ENCODE measurements at regions of chr11 and their contacts with region 1.

Region 1: GRCh38 chr11:64659417-64660144 is 63.4 kb downstream of the NRXN2 start:
- DNase-seq: peak in 1 of 2 donors; percentile 45
- ATAC-seq: no peak
- H3K4me3 ChIP-seq: no peak overlapping the region
- H3K27ac ChIP-seq: no peak overlapping the region
- H3K4me1 ChIP-seq: no peaks in the 10 kb centered on the region
- H3K27me3 ChIP-seq: no peaks in the 10 kb centered on the region

Region 2: GRCh38 chr11:64688534-64688982 is 29.0 kb after region 1 on chr11:
- intact Hi-C with region 1: loop called in 1 of 2 experiments (anchors 1 kb)
- DNase-seq: peak; percentile 95 to 97
- ATAC-seq: peak; percentile 93
- H3K4me3 ChIP-seq: no peak overlapping the region
- H3K27ac ChIP-seq: peak overlapping the region in 1 of 2 donors; percentile 11
- H3K4me1 ChIP-seq: no peaks in the 10 kb centered on the region
- H3K27me3 ChIP-seq: no peaks in the 10 kb centered on the region

Region 3: DNA sequence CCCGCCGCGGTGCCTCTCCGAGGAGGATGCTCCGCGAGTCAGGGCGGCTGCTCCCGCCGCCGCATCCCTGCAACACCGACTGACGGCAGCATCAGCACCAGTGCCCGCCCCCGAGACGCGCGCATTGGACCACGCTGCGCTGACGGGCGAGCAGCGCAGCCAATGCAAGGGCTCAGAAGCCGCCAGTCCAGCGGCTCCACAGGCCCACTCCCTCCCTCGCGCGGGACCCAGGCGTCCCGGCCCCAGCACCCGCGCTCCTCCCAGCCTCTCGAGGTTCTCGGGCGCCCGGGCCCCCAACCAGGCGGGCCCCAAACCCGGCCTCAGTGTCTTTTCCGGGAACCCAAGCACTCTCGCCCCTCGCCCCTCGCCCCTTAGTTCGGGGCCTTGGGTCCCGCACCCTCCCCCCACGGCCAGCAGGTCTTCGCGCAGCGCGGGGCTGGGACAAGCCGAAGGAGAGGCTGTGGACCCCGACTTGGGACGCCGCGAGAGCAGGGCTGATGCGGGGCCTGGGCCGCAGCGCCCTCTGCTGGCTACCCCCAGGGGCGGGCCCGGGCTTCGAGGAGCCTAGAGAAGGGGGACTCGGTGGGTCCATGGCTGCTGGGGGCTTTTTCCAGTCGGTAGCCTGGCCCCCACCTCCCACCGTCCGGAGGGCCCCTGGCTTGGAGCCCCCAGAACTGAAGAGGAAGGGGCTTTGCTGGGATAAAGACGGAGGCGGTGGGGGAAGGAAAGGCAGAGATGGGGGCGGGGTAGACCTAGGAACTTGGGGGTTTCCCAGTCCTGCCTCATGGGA is 63.7 kb after region 1 on chr11 and contains the start of gene NRXN2:
- intact Hi-C with region 1: loop called in 1 of 2 experiments (anchors 5 kb)
- DNase-seq: peak; percentile 91 to 95
- ATAC-seq: peak; percentile 92
- H3K4me3 ChIP-seq: peak within 1 kb of the TSS; percentile 48 to 84
- H3K27ac ChIP-seq: no peak within 1 kb of the TSS
- H3K4me1 ChIP-seq: no peaks in the 10 kb centered on the region
- H3K27me3 ChIP-seq: no peaks in the 10 kb centered on the region
- total RNA-seq, gene NRXN2: 21.6 to 35.9 TPM

Measured in aorta (tissue), 5 donors.